CD8-positive, alpha-beta memory T cell (primary cell): ENCODE measurements at regions of chr12 and their contacts with region 1.

Region 1: DNA sequence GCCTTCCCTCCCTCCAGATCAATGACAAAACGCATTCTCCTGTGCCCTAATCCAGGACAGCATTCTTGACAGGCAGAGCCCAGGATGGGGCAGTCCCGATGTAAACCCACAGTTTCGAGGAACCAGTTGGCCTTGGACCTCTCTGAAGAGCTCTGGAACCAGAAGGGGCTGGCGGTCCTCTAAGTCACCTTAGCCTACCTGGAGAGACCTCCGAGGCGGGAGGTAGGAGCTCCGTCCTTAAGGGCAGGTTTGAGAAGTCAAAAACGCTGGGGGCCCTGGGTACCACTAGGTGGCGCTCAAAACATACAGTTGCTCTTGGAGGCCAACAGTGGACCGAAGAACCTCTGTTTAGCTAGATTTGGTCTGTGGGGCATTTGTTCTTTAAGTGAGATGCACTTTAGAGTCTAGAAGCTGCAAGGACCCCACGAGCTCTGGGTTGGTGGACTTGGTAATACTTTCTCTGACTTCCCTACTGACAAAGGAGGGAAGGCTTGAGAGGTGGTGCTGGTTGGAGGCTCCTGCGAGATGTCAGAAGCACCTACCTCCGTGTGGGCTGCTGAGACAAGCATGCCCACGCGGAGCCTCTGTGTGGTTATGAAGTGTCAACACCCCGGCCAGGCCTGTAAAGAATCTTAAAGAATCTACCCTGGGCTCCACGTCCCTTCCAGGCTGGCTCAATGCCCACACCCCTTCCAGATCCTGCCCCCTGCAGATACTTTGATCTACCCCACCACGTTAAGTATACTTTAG is 74.8 kb upstream of the CHST11 start:
- DNase-seq: peak; percentile 70 to 85 (median 70)
- H3K4me3 ChIP-seq: no peak overlapping the region
- H3K4me3 Mint-ChIP-seq: peak overlapping the region in 2 of 7 donors; percentile 25 to 28
- H3K27ac ChIP-seq: no peak overlapping the region
- H3K27ac Mint-ChIP-seq: peak overlapping the region in 3 of 8 donors; percentile 0 to 26 (median 8)
- H3K4me1 ChIP-seq: no peaks in the 10 kb centered on the region
- H3K4me1 Mint-ChIP-seq: peaks cover 9 to 13% (median 11%) of the 10 kb centered on the region in 3 donors
- H3K27me3 ChIP-seq: no peaks in the 10 kb centered on the region
- H3K27me3 Mint-ChIP-seq: peaks cover 5 to 10% of the 10 kb centered on the region in 2 donors

Region 2: GRCh38 chr12:104306943-104307654 is 74.8 kb before region 1 on chr12:
- CTCF ChIA-PET with region 1: no interaction called
- POLR2A ChIA-PET with region 1: no interaction called
- DNase-seq: no peak
- H3K4me3 ChIP-seq: no peak overlapping the region
- H3K4me3 Mint-ChIP-seq: no peak overlapping the region
- H3K27ac ChIP-seq: no peak overlapping the region
- H3K27ac Mint-ChIP-seq: peak overlapping the region in 2 of 8 donors; percentile 16 to 56
- H3K4me1 ChIP-seq: peaks cover 19% of the 10 kb centered on the region
- H3K4me1 Mint-ChIP-seq: peaks cover 42 to 69% (median 61%) of the 10 kb centered on the region in 3 donors
- H3K27me3 ChIP-seq: no peaks in the 10 kb centered on the region
- H3K27me3 Mint-ChIP-seq: no peaks in the 10 kb centered on the region

Region 3: DNA sequence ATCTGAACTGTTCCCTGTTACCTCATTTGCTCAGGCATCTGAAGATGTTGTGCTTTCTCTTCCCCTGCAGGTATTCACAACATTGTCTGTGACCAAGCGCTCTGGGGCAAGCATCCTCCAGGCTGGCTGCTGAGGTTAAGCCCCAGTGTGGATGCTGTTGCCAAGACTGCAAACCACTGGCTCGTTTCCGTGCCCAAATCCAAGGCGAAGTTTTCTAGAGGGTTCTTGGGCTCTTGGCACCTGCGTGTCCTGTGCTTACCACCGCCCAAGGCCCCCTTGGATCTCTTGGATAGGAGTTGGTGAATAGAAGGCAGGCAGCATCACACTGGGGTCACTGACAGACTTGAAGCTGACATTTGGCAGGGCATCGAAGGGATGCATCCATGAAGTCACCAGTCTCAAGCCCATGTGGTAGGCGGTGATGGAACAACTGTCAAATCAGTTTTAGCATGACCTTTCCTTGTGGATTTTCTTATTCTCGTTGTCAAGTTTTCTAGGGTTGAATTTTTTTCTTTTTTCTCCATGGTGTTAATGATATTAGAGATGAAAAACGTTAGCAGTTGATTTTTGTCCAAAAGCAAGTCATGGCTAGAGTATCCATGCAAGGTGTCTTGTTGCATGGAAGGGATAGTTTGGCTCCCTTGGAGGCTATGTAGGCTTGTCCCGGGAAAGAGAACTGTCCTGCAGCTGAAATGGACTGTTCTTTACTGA is 33.5 kb before region 1 on chr12:
- CTCF ChIA-PET with region 1: no interaction called
- POLR2A ChIA-PET with region 1: no interaction called
- DNase-seq: no peak
- H3K4me3 ChIP-seq: no peak overlapping the region
- H3K4me3 Mint-ChIP-seq: no peak overlapping the region
- H3K27ac ChIP-seq: no peak overlapping the region
- H3K27ac Mint-ChIP-seq: no peak overlapping the region
- H3K4me1 ChIP-seq: no peaks in the 10 kb centered on the region
- H3K4me1 Mint-ChIP-seq: no peaks in the 10 kb centered on the region
- H3K27me3 ChIP-seq: no peaks in the 10 kb centered on the region
- H3K27me3 Mint-ChIP-seq: no peaks in the 10 kb centered on the region

Region 4: DNA sequence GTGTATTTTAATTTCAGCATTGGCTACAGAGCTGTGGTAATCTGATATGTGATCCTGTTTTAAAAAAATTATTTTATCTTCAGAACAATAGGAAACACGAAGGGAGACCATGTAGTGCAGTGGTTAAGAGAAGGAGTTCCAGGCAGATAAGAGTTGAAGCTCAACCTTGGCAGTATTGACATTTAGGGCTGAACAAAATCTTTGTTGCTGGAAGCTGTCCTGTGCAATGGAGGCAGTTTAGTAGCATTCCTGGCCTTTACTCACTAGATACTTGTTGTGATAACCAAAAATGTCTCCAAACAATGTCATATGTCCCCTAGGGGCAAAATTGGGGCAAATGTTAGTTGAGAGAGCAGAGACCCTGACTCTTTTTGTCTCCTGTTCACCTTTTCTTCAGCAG is 134.0 kb after region 1 on chr12:
- CTCF ChIA-PET with region 1: interaction called, 14 read pairs
- POLR2A ChIA-PET with region 1: no interaction called
- DNase-seq: no peak
- H3K4me3 ChIP-seq: no peak overlapping the region
- H3K4me3 Mint-ChIP-seq: peak overlapping the region in 1 of 7 donors; percentile 45
- H3K27ac ChIP-seq: no peak overlapping the region
- H3K27ac Mint-ChIP-seq: peak overlapping the region in 7 of 8 donors; percentile 52 to 93 (median 80)
- H3K4me1 ChIP-seq: peaks cover 29% of the 10 kb centered on the region
- H3K4me1 Mint-ChIP-seq: peaks cover 85 to 94% (median 93%) of the 10 kb centered on the region in 3 donors
- H3K27me3 ChIP-seq: no peaks in the 10 kb centered on the region
- H3K27me3 Mint-ChIP-seq: no peaks in the 10 kb centered on the region

Region 5: DNA sequence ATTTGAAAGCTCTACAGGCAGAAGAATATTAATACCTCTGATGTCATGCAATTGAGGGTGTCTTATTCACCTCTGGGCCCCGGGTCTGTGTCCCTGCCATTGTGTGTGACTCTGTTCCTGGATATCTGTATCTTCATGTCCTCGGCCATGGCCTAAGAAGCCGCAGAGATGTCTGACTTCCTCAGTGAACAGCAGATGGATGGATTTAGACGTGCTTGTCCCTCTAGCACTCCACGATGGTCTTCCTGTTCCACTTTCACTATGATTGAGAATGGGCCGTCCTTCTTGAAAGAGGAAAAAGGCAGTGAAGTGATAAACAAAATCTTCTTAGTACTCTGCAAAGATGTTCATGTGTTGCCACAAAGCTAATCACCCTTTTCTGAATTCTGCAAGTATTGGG is 358.8 kb after region 1 on chr12:
- CTCF ChIA-PET with region 1: interaction called, 15 read pairs
- POLR2A ChIA-PET with region 1: no interaction called
- DNase-seq: no peak
- H3K4me3 ChIP-seq: peak overlapping the region; percentile 16
- H3K4me3 Mint-ChIP-seq: peak overlapping the region; percentile 1 to 87 (median 74)
- H3K27ac ChIP-seq: no peak overlapping the region
- H3K27ac Mint-ChIP-seq: peak overlapping the region; percentile 69 to 95 (median 88)
- H3K4me1 ChIP-seq: peaks cover 42% of the 10 kb centered on the region
- H3K4me1 Mint-ChIP-seq: peaks cover 77 to 93% (median 81%) of the 10 kb centered on the region in 3 donors
- H3K27me3 ChIP-seq: no peaks in the 10 kb centered on the region
- H3K27me3 Mint-ChIP-seq: peaks cover 0 to 1% of the 10 kb centered on the region in 2 donors

Region 6: GRCh38 chr12:104942075-104942474 is 560.2 kb after region 1 on chr12:
- CTCF ChIA-PET with region 1: interaction called, 10 read pairs
- POLR2A ChIA-PET with region 1: no interaction called
- DNase-seq: no peak
- H3K4me3 ChIP-seq: no peak overlapping the region
- H3K4me3 Mint-ChIP-seq: no peak overlapping the region
- H3K27ac ChIP-seq: no peak overlapping the region
- H3K27ac Mint-ChIP-seq: no peak overlapping the region
- H3K4me1 ChIP-seq: no peaks in the 10 kb centered on the region
- H3K4me1 Mint-ChIP-seq: no peaks in the 10 kb centered on the region
- H3K27me3 ChIP-seq: no peaks in the 10 kb centered on the region
- H3K27me3 Mint-ChIP-seq: peaks cover 0 to 4% of the 10 kb centered on the region in 2 donors